Gastrocnemius medialis (tissue), 4 donors: ENCODE measurements at regions of chr7 and their contacts with region 1.

Region 1: DNA sequence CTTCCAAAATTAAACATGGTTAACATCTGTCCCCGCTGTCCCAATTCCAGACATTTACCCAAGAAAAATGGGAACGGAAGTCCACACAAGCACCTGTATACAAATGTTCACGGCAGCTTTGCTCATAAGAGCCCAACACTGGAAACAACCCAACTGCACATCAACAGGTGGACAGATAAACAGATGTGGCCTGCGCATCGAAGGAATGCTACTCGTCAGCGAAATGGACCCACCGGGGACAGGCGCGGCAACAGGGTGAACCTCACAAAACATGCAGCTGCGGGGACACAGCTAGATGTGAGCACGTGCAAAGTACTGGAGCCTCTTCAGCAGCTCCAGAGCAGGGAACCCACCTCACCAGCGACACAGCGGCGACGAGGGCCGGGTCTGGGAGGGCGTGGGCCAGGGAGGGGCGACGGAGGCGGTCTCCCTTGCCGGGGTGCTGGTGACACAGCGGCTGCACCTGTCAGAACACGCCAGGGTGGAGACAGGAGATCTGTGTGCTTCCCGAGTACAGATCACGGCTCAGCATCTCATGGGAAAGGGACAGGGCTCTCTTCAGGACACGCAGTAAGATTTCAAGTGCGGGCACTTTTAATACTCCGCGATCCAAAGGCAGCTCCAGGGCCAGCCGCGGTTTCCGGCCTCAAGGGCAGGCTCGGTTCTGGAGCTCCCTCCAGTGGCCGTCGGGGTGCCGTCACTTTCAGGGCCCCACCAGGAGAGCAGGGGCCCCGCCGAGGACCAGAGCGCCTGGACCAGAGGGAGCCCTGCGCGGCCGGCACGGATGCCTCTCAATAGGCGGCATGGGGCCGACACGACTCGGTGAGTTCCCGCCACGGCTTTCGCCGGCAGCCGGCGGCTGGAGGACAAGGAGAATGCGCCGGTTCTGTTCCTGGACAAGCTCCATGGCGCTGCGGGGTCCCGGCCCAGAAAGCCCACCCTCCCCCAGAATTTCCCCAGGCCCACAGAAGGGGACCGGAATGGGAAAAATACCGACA is 21.2 kb downstream of the GPR146 start:
- DNase-seq: peak; percentile 68 to 76
- ATAC-seq: peak; percentile 93 to 94
- H3K4me3 ChIP-seq: peak overlapping the region; percentile 11 to 50 (median 44)
- H3K27ac ChIP-seq: no peak overlapping the region
- H3K4me1 ChIP-seq: peaks cover 6 to 7% of the 10 kb centered on the region in 2 donors
- H3K27me3 ChIP-seq: no peaks in the 10 kb centered on the region
- CTCF ChIP-seq: peak; percentile 94 to 98 (median 97)
- POLR2A ChIP-seq: no peak

Region 2: GRCh38 chr7:992709-993607 is 72.6 kb before region 1 on chr7:
- in situ Hi-C with region 1: loop called (anchors 5 to 10 kb)
- intact Hi-C with region 1: loop called (anchors 1 kb)
- DNase-seq: peak; percentile 92
- ATAC-seq: peak; percentile 94 to 97
- H3K4me3 ChIP-seq: no peak overlapping the region
- H3K27ac ChIP-seq: no peak overlapping the region
- H3K4me1 ChIP-seq: peaks cover 3% of the 10 kb centered on the region in 2 donors
- H3K27me3 ChIP-seq: peaks cover 28 to 46% (median 44%) of the 10 kb centered on the region in 3 donors
- CTCF ChIP-seq: peak; percentile 99 to 100 (median 100)
- POLR2A ChIP-seq: no peak

Region 3: DNA sequence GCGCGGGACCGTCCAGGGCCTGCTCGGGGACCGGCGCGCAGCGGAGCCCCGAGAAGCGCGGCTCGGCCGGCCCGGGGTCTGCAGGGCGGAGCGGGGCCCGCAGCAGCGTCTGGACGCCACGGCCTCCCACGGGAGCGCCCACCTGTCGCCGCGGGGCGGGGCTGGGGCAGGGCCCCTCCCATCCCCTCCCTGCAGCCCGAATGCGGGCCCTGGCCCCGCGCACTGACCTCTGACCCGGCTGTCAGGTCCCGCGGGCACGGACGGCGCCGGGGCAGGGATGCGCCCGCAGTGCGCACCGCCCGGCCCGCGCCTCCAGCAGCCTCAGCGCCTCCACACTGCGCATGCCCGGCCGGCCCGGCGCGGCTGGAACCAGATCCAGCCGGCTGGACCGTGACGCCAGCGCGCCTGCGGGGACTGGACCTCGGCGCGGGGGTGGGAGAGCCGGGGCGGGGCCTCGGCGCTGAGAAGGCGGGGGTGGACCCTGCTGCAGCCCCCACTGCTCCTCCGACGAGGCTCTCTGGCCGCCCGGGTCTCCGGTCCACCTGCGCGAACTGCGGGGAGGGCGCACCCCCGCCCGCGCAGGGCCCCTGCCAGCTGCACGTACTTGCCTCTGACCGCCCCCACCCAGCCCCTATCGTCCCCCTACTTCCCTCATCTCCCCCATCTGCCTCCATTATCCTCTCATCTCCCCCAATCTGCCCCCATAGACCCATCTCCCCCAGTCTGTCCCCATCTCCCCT is 37.4 kb before region 1 on chr7:
- in situ Hi-C with region 1: no loop called
- intact Hi-C with region 1: loop called (anchors 5 kb)
- DNase-seq: peak; percentile 76 to 85
- ATAC-seq: peak; percentile 81 to 88
- H3K4me3 ChIP-seq: peak overlapping the region; percentile 62 to 91 (median 74)
- H3K27ac ChIP-seq: peak overlapping the region; percentile 93 to 98 (median 97)
- H3K4me1 ChIP-seq: peaks cover 21 to 29% of the 10 kb centered on the region in 2 donors
- H3K27me3 ChIP-seq: no peaks in the 10 kb centered on the region
- CTCF ChIP-seq: no peak
- POLR2A ChIP-seq: peak; percentile 63 to 69